ENCODE measurements at regions of chr9 and their contacts with region 1.

Region 1: DNA sequence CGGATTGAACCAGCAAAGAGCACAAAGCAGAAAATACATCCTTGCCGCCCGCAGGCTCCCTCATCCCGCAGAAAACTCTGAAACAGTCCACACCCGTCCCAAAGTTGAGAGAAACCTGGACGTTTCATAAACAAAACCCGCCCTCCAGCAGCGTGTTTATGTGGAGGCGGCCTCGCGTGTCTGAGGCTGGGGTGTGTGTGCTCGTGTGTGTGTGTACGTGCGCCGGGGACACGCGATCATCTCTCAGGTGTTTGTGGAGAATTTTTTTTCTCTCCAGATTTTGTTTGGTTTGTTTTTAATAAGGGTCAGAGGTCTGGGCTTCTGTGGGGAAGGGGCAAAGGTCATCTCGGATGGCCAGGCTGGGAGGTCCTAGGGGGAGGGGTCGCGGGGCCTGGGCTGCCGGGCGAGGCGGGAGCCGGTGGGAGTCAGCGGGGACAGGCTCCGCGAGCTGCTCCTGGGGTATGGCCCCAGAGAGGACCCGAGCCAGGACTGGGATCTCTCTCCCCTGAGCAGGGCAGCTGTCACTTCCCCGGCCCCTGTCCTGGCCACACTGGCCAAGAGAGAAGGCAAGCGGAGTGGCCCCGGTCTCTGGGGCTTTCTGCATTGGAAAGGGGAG is 206.4 kb downstream of the C9orf50 start:
- DNase-seq: no peak
- H3K4me3 ChIP-seq: peak overlapping the region; percentile 29 to 34; a peak in 2 of 4 replicates
- H3K27ac ChIP-seq: peak overlapping the region; percentile 97 to 99
- H3K4me1 ChIP-seq: peaks cover 21 to 58% of the 10 kb centered on the region in 2 experiments; a peak in 3 of 4 replicates
- H3K27me3 ChIP-seq: no peaks in the 10 kb centered on the region
- CTCF ChIP-seq: no peak
- EP300 ChIP-seq: no peak
- RAD21 ChIP-seq: no peak

Region 2: DNA sequence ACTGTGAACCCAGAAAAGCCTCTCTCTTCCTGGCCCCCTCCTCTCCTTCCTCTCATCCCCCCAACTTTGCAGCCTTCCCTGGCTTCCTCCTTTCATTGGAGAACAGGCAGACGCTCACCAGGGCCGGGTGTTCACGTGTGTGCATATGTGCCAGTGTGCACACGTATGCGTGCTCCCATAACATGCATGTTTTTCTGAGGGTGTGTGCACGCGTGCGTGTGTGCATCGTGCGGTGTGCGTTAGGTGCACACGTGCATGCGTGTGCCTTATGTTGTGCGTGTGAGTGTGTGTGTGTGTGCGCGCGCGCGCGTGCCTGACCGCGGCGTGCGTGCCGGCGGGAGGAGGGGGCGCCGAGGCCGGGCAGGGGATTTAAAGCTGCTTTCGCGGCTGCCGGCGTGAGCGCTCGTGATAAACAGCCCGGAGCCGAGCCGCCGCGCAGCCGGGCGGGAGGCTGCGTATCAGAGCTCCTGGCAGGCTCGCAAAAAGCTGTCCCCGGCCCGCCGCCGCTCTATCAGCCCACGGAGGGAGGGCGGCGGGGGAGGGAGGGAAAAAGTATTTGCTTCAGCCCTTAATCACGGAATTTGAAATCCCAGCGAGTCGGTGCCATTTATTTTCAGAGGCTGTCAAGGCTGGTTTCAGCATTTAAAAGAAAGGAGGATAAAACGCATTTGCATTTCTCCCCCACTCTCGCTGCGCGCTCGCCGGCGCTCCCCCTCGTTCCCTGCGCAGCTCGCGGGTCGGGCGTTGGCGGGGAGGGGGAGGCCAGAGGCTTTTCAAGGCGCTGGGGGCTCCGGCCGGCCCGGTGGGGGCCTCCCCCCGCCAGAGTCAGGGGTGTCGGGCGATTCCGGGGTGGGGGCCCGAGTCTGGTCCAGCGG is 22.5 kb after region 1 on chr9:
- CTCF ChIA-PET with region 1: interaction called, 4 read pairs
- POLR2A ChIA-PET with region 1: interaction called, 11 read pairs
- DNase-seq: peak; percentile 88
- H3K4me3 ChIP-seq: peak overlapping the region; percentile 51 to 70
- H3K27ac ChIP-seq: peak overlapping the region in 1 of 2 experiments; percentile 64; a peak in 3 of 4 replicates
- H3K4me1 ChIP-seq: peaks cover 0 to 26% of the 10 kb centered on the region in 2 experiments; a peak in 1 of 4 replicates
- H3K27me3 ChIP-seq: no peaks in the 10 kb centered on the region
- CTCF ChIP-seq: no peak
- EP300 ChIP-seq: 0 out of 4 replicates have a peak, but pooled peaks of 1 of the 2 experiments have one; percentile 17
- RAD21 ChIP-seq: no peak; the same call in 1 of the 2 replicates

Region 3: GRCh38 chr9:129446828-129447550 is 32.5 kb after region 1 on chr9:
- CTCF ChIA-PET with region 1: no interaction called
- POLR2A ChIA-PET with region 1: no interaction called
- DNase-seq: no peak
- H3K4me3 ChIP-seq: no peak overlapping the region
- H3K27ac ChIP-seq: no peak overlapping the region
- H3K4me1 ChIP-seq: peaks cover 0 to 21% of the 10 kb centered on the region in 2 experiments; a peak in 1 of 4 replicates
- H3K27me3 ChIP-seq: no peaks in the 10 kb centered on the region
- CTCF ChIP-seq: no peak
- EP300 ChIP-seq: no peak
- RAD21 ChIP-seq: no peak

Region 4: DNA sequence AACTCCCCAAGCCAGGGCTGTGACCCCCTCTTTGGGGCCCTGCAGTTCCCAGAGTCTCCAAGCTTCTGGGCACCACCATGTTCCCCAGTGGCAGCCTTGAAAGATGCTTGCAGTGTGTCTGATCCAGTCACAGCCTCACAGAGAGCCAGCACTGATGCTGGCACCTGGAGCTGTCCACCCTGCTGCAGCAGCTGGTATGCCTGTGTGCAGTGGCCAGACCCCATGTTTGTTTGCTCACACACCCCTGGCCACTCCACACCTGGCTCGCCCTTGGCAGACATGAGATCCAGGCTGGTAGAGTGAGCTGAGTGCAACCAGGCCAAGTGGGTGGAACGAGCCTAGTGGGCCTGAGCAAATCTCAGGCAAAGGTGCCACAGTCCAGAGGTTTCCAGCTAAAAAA is 100.4 kb after region 1 on chr9:
- CTCF ChIA-PET with region 1: no interaction called
- POLR2A ChIA-PET with region 1: no interaction called
- DNase-seq: no peak
- H3K4me3 ChIP-seq: no peak overlapping the region
- H3K27ac ChIP-seq: no peak overlapping the region
- H3K4me1 ChIP-seq: no peaks in the 10 kb centered on the region
- H3K27me3 ChIP-seq: no peaks in the 10 kb centered on the region
- CTCF ChIP-seq: no peak
- EP300 ChIP-seq: no peak
- RAD21 ChIP-seq: no peak